ENCODE measurements at regions of chr17 and their contacts with region 1.

Region 1: GRCh38 chr17:47840740-47841603 is at the start of gene SCRN2:
- DNase-seq: peak; percentile 79 to 88 (median 83)
- H3K4me3 ChIP-seq: peak within 1 kb of the TSS; percentile 73
- H3K4me3 Mint-ChIP-seq: peak within 1 kb of the TSS; percentile 80 to 97 (median 94)
- H3K27ac ChIP-seq: peak within 1 kb of the TSS; percentile 77
- H3K27ac Mint-ChIP-seq: peak within 1 kb of the TSS; percentile 44 to 98 (median 85)
- H3K4me1 ChIP-seq: peaks cover 32% of the 10 kb centered on the region
- H3K4me1 Mint-ChIP-seq: peaks cover 23 to 34% (median 28%) of the 10 kb centered on the region in 3 donors
- H3K27me3 ChIP-seq: peaks cover 8% of the 10 kb centered on the region
- H3K27me3 Mint-ChIP-seq: peaks cover 4 to 29% of the 10 kb centered on the region in 2 donors
- total RNA-seq, gene SCRN2: 17.3 to 18.0 TPM

Region 2: DNA sequence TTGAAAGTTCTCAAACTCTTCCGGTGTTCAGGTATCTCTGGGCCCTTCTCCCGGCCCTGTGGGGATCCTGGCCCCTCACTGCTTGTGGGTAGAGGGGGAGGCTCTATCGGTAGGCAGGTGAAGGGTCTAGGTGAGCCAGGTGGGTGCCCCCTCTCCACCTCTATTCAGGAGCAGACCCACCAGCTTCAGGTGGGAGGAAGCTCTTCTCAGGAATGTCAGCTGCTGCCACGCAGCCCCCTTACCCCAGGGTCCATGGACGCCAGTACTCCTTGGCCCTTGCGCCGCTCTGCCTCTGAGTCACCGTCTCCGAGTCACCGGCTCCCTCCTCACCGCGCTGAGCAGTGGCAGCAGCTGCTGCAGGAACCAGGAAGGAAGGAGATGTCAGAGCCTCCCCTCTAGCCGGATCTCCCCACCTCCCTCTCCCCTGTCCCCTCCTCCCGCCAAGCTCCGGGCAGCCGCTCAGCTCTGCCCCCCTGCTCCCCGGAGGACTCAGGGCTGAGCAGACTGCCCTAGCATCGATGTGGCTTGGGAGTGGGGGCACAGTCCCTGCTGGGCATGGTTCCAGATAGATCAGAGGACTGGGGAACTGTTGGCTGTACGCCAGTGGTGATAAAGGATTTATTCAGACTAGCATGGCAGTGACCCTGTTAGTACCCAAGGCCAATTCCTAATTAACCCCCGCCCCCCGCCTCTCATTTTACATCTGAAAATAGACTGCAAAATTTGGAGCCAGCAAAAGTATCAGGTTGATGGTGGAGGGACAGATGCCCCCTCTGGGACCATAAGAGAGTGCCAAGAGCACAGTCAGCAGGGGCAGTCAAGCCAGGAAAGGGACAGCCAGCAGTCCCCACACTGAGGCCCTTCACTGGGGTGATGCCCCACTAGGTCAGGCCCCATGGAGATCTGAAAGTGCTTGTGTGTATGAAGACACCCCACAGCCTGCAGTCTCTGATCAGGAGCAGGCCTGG is 19.3 kb before region 1 on chr17 and contains the start of gene OSBPL7:
- CTCF ChIA-PET with region 1: interaction called, 14 read pairs
- POLR2A ChIA-PET with region 1: interaction called, 3 read pairs
- DNase-seq: peak; percentile 66 to 87 (median 74)
- H3K4me3 ChIP-seq: peak within 1 kb of the TSS; percentile 93
- H3K4me3 Mint-ChIP-seq: peak within 1 kb of the TSS; percentile 88 to 98 (median 97)
- H3K27ac ChIP-seq: peak within 1 kb of the TSS; percentile 79
- H3K27ac Mint-ChIP-seq: peak within 1 kb of the TSS; percentile 88 to 98 (median 95)
- H3K4me1 ChIP-seq: peaks cover 26% of the 10 kb centered on the region
- H3K4me1 Mint-ChIP-seq: peaks cover 25 to 45% (median 25%) of the 10 kb centered on the region in 3 donors
- H3K27me3 ChIP-seq: no peaks in the 10 kb centered on the region
- H3K27me3 Mint-ChIP-seq: no peaks in the 10 kb centered on the region
- total RNA-seq, gene OSBPL7: 16.9 to 17.5 TPM

Region 3: DNA sequence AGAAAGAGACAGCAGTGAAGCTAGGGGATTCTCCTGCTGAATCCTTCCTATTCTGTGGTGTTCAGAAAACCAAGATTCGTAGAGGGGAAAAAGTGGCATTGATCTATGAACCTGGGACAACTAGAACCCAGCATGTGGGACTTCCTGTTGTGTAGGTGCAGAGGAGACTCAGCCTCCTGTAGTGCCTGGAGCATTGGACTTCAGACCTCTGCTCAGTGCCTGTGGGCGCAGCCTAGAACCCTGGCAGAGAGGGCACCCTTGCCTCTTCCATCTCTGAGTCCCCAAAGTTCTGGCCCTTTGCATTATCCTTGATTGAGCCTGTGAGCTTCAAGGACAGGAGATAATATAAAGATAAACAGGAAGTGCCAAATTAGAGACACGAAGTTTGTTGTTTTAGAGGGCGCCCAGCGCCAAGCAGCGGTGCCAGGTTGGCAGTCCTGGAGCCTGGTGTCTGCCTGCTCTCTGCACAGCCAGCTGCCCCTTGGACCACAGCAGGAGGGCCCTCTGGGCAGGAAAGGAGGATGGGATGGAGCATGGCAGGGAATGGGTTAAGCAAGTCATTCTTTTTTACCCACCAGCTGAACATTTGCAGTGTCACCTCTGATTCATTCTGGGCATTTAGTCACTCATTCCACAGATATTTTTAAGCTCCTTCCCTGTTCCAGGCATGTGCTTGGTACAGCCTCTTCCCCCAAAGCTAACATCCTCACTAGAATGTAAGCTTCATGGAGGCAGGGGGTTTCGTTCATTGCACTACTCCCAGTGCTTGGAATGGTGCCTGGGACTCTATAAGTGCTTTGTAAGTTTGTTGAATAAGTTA is 21.9 kb after region 1 on chr17:
- CTCF ChIA-PET with region 1: interaction called, 15 read pairs
- POLR2A ChIA-PET with region 1: no interaction called
- DNase-seq: no peak
- H3K4me3 ChIP-seq: no peak overlapping the region
- H3K4me3 Mint-ChIP-seq: no peak overlapping the region
- H3K27ac ChIP-seq: no peak overlapping the region
- H3K27ac Mint-ChIP-seq: no peak overlapping the region
- H3K4me1 ChIP-seq: peaks cover 17% of the 10 kb centered on the region
- H3K4me1 Mint-ChIP-seq: peaks cover 0 to 3% (median 0%) of the 10 kb centered on the region in 3 donors
- H3K27me3 ChIP-seq: no peaks in the 10 kb centered on the region
- H3K27me3 Mint-ChIP-seq: peaks cover 11 to 33% of the 10 kb centered on the region in 2 donors

Region 4: DNA sequence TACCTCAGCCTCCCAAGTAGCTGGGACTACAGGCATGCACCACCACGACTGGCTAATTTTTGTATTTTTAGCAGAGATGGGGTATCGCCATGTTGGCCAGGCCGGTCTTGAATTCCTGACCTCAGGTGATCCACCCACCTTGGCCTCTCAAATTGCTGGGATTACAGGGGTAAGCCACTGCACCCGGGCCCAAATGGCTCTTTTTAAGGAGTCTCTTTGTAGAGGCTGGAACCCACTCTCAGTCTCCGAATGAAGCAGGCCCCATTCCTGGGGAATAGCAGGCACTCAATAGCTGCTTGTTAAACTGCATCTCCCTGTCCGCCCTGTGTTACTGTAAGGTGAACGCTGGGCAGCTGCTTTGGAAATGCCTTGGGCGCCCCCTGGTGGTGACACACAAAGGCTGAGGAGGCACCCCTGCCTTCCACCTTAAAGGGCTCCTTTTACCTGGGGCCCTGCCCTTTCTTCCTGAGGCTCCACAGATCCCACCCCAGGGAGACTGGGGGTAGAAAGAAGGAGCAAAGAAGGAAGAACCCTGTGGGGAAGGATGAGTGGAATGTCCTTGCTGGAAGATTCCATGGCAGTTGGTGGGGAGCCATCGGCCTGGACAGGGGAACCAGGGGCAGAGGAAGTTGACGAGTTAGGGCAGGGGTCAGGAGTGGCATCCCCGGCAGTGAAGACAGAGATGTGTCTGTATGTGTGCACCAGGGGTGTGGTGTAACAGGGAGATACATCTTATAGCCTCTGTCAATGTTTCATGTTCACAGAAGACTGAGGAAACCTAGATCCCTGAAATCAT is 49.0 kb after region 1 on chr17:
- CTCF ChIA-PET with region 1: interaction called, 314 read pairs
- POLR2A ChIA-PET with region 1: interaction called, 18 read pairs
- DNase-seq: peak; percentile 79 to 93 (median 87)
- H3K4me3 ChIP-seq: no peak overlapping the region
- H3K4me3 Mint-ChIP-seq: peak overlapping the region in 2 of 7 donors; percentile 11 to 70
- H3K27ac ChIP-seq: no peak overlapping the region
- H3K27ac Mint-ChIP-seq: peak overlapping the region in 1 of 8 donors; percentile 17
- H3K4me1 ChIP-seq: peaks cover 19% of the 10 kb centered on the region
- H3K4me1 Mint-ChIP-seq: peaks cover 18 to 27% (median 22%) of the 10 kb centered on the region in 3 donors
- H3K27me3 ChIP-seq: no peaks in the 10 kb centered on the region
- H3K27me3 Mint-ChIP-seq: peaks cover 0 to 5% of the 10 kb centered on the region in 2 donors

Measured in CD8-positive, alpha-beta memory T cell (primary cell).